GM12878 (cell line): ENCODE measurements at regions of chr7 and their contacts with region 1.

Region 1: DNA sequence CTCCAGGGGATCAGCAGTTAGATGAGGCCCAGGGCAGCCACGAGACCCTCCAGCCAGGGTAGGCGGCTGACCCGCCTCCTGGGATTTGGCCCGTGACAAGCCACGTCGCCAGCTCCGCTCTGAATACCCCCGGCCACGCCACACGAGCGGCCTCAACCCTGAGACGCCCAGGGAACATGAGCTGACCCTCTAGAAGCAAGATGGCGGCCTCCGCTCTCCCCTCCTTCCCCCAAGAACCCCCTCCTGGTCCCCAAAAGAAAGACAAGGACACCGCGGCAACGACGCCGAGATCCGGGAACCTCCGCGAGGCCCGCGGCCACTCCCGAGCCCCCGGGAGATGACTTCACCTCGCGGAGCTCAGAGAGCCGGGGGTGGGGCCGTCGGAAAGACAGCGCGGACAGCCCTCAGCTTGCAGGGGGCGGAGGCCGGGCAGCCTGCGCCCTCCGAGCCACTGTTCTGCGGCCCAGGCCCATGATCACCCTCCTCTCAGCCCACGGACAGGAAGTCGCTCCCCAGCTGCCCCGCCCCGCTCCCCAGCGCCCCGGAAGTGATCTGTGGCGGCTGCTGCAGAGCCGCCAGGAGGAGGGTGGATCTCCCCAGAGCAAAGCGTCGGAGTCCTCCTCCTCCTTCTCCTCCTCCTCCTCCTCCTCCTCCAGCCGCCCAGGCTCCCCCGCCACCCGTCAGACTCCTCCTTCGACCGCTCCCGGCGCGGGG is at the start of gene RALA:
- DNase-seq: peak; percentile 48
- ATAC-seq: peak; percentile 89
- H3K4me3 ChIP-seq: peak within 1 kb of the TSS; percentile 88
- H3K27ac ChIP-seq: peak within 1 kb of the TSS; percentile 89
- H3K4me1 ChIP-seq: peaks cover 11% of the 10 kb centered on the region
- H3K27me3 ChIP-seq: no peaks in the 10 kb centered on the region
- CTCF ChIP-seq: no peak
- EP300 ChIP-seq: no peak
- POLR2A ChIP-seq: peak; percentile 96
- RAD21 ChIP-seq: no peak
- polyA plus RNA-seq, gene RALA: 8.1 to 13.3 TPM

Region 2: DNA sequence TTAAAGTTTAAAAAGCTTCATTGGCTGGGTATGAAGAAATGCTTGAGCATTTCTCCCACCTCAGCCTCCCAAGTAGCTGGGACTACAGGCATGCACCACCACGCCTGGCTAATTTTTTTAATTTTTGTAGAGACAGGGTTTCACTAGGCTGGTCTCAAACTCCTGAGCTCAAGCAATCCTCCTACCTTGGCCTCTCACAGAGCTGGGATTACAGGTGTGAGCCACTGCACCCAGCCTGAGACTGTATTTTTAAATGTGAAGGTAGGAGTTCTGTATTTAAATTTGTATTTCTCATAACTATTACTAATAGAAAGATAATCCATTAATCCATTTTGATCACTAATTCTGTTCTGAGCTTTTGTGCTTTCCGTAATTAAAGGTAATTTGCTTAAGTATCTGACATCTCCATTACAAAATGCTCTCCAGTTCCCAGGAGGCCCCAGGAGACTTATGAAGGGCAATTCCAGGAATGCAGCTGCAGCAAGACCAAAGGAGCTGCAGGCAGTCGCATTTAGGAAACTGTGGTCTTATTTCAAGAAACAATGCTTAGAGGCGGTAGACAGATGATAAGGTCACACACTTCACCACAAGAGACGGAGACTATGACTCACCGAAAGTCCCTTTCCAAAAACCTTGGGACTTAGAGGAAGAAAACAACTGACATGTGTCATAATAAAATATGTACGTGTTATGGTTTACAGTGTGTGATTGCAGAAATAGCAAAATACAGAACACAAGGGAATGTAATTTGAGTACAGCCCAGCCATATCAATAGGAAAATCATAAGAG is 33.7 kb before region 1 on chr7:
- CTCF ChIA-PET with region 1: interaction called, 8 read pairs
- POLR2A ChIA-PET with region 1: interaction called, 8 read pairs
- RAD21 ChIA-PET with region 1: interaction called, 6 read pairs
- SMC1A ChIA-PET with region 1: interaction called, 13 read pairs
- in situ Hi-C with region 1: no loop called
- intact Hi-C with region 1: no loop called
- DNase-seq: peak; percentile 45
- ATAC-seq: peak; percentile 94
- H3K4me3 ChIP-seq: no peak overlapping the region
- H3K27ac ChIP-seq: no peak overlapping the region
- H3K4me1 ChIP-seq: peaks cover 5% of the 10 kb centered on the region; the same call in 1 of the 2 replicates
- H3K27me3 ChIP-seq: no peaks in the 10 kb centered on the region
- CTCF ChIP-seq: no peak
- EP300 ChIP-seq: peak; percentile 90 to 96
- POLR2A ChIP-seq: no peak
- RAD21 ChIP-seq: no peak

Region 3: GRCh38 chr7:39637400-39637799 is 14.2 kb after region 1 on chr7:
- CTCF ChIA-PET with region 1: interaction called, 7 read pairs
- POLR2A ChIA-PET with region 1: interaction called, 8 read pairs
- RAD21 ChIA-PET with region 1: interaction called, 6 read pairs
- SMC1A ChIA-PET with region 1: interaction called, 17 read pairs
- in situ Hi-C with region 1: no loop called
- intact Hi-C with region 1: no loop called
- DNase-seq: no peak
- ATAC-seq: peak; percentile 56
- H3K4me3 ChIP-seq: no peak overlapping the region
- H3K27ac ChIP-seq: no peak overlapping the region; the same call in 1 of the 2 replicates
- H3K4me1 ChIP-seq: peaks cover 32% of the 10 kb centered on the region
- H3K27me3 ChIP-seq: no peaks in the 10 kb centered on the region
- CTCF ChIP-seq: no peak
- EP300 ChIP-seq: no peak
- POLR2A ChIP-seq: no peak
- RAD21 ChIP-seq: no peak

Region 4: DNA sequence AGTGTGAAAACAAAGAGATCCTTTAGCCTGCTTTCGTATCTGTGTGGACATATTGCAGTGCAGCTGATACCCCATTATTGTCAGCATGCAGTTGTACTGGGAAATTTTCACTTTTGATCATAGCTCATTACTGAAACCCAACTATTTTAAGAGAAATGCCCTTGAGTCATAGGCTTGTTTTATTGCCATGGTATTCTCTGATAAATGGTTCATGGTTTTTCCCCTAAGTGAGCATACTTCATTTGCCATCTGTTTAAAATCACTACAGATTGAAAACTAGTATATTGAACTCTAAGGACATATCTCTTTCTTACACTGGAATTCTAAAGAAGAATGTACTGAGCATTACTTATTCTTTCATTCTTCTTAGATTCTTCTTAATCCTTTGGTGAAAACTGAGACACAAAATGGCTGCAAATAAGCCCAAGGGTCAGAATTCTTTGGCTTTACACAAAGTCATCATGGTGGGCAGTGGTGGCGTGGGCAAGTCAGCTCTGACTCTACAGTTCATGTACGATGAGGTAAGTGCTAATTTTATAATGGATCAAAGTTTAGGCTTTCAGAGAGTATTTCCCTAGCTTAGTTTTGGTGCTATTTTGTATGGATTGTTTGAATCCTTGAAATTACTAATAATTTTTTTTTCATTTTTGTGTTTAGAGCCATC is 63.2 kb after region 1 on chr7:
- CTCF ChIA-PET with region 1: no interaction called
- POLR2A ChIA-PET with region 1: interaction called, 9 read pairs
- RAD21 ChIA-PET with region 1: interaction called, 10 read pairs
- SMC1A ChIA-PET with region 1: interaction called, 6 read pairs
- in situ Hi-C with region 1: no loop called
- intact Hi-C with region 1: no loop called
- DNase-seq: peak; percentile 47
- ATAC-seq: peak; percentile 94
- H3K4me3 ChIP-seq: no peak overlapping the region
- H3K27ac ChIP-seq: 0 out of 2 replicates have a peak overlapping the region, but pooled peaks have one; percentile 22
- H3K4me1 ChIP-seq: peaks cover 9% of the 10 kb centered on the region
- H3K27me3 ChIP-seq: no peaks in the 10 kb centered on the region
- CTCF ChIP-seq: no peak
- EP300 ChIP-seq: 0 out of 4 replicates have a peak, but pooled peaks of 1 of the 2 experiments have one; percentile 25
- POLR2A ChIP-seq: no peak
- RAD21 ChIP-seq: no peak

Region 5: DNA sequence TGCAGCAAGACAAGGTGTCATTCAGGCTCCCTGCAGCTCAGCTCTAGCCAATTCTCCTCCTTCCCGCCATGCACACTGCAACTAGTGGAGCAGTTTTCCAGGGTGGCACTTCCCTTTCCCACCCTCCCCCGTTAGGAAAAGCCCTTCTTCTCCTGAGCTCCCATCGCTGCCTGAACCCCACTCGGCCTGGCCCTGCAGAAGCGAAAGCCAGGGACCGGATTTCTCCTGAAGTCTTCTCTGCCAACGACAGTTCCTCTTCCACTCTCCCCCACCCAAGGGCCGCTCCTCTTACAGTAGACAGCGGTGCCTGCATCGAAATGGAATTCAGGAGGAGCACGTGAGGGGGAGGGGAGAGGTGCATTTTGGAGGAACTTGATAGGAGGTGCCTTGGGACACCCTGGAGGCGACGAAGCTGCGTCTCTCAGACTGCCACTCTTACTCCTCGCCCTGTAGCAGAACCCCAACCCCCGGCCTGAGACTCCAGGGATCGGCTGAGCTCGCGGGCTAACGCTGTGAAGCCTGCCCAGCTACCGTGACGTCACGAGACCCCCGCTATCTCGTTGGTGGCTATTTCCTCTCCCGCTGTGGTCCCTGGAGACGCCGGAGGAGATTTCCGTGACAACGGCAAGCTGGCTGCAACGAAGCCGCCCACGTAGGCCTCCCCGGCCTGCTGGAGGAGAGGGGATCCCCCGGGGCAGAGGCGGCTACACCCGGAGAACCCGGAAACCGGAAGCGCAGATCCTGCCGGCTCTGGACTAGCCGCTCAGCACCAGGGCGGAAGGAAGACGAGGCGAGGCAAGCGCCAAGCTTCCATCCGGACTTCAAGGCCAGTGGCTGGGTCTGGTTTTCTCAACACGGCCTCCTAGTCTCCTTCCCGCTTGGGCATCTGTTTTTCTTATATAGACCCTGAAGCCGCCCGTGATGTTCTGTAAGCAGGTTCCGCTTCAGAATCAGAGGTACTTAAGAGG is 109.9 kb after region 1 on chr7:
- CTCF ChIA-PET with region 1: interaction called, 10 read pairs
- POLR2A ChIA-PET with region 1: interaction called, 64 read pairs
- RAD21 ChIA-PET with region 1: interaction called, 75 read pairs
- SMC1A ChIA-PET with region 1: interaction called, 82 read pairs
- in situ Hi-C with region 1: no loop called
- intact Hi-C with region 1: loop called (anchors 1 kb)
- DNase-seq: peak; percentile 95
- ATAC-seq: peak; percentile 93
- H3K4me3 ChIP-seq: peak overlapping the region; percentile 77
- H3K27ac ChIP-seq: peak overlapping the region; percentile 80
- H3K4me1 ChIP-seq: peaks cover 10% of the 10 kb centered on the region
- H3K27me3 ChIP-seq: no peaks in the 10 kb centered on the region
- CTCF ChIP-seq: no peak
- EP300 ChIP-seq: peak; percentile 56 to 79
- POLR2A ChIP-seq: peak; percentile 91
- RAD21 ChIP-seq: peak; percentile 4; the same call in 1 of the 2 replicates

Region 6: DNA sequence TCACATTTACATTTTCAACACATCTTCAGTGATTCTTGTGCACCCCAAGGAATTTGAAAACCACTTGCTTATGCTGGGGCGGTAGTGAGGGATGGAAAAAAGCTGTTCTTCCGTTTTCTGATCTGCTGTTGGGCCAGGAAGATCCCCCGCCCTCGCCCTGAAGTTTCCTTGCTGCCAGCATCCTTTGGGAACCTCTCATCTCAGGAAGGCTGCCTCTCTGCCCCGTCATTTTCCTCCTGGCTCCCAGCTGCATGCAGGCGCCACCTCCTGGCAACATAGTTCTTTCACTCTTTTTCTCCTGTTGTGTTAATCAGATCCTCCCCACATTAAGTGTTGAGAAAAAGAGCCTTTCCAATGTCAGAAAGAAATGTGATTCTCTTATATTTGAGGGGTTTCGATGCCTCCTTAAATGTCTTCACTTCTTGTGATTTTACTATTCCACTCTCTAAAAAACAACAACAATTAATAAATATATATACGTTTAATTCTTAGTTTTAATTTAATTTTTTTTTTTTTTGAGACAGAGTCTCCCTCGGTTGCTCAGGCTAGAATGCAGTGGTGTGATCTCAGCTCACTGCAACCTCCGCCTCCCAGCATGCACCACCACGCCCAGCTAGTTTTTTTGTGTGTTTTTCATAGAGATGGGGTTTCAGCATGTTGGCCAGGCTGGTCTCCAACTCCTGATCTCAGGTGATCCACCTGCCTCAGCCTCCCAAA is 123.1 kb after region 1 on chr7:
- CTCF ChIA-PET with region 1: interaction called, 36 read pairs
- POLR2A ChIA-PET with region 1: interaction called, 5 read pairs
- RAD21 ChIA-PET with region 1: interaction called, 11 read pairs
- SMC1A ChIA-PET with region 1: interaction called, 9 read pairs
- in situ Hi-C with region 1: no loop called
- intact Hi-C with region 1: no loop called
- DNase-seq: no peak
- ATAC-seq: peak; percentile 78
- H3K4me3 ChIP-seq: no peak overlapping the region
- H3K27ac ChIP-seq: no peak overlapping the region
- H3K4me1 ChIP-seq: peaks cover 6% of the 10 kb centered on the region
- H3K27me3 ChIP-seq: no peaks in the 10 kb centered on the region
- CTCF ChIP-seq: peak; percentile 67 to 83 (median 81)
- EP300 ChIP-seq: no peak
- POLR2A ChIP-seq: no peak
- RAD21 ChIP-seq: peak; percentile 91

Region 7: DNA sequence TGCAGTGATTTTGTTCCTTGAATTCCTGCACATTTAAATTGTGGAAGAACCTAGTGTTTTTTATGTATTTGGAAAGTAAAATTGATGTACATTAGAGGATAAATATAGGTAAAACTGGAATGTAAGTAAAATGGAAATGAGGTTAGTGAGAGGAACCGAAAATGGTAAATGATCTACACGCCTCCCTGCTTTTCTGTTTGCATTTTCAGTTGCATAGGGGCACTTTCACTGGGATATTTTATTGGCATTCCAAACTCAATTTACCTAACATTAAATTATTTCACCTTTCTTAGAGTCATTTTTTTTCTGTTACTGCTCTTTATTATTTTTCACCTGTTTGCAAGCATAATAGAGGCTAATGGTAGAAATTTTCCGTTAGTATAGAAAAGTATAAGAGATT is 334.9 kb after region 1 on chr7:
- CTCF ChIA-PET with region 1: no interaction called
- POLR2A ChIA-PET with region 1: no interaction called
- RAD21 ChIA-PET with region 1: no interaction called
- SMC1A ChIA-PET with region 1: no interaction called
- in situ Hi-C with region 1: no loop called
- intact Hi-C with region 1: no loop called
- DNase-seq: no peak
- ATAC-seq: peak; percentile 53
- H3K4me3 ChIP-seq: peak overlapping the region; percentile 49
- H3K27ac ChIP-seq: no peak overlapping the region
- H3K4me1 ChIP-seq: peaks cover 5% of the 10 kb centered on the region; the same call in 1 of the 2 replicates
- H3K27me3 ChIP-seq: no peaks in the 10 kb centered on the region
- CTCF ChIP-seq: no peak
- EP300 ChIP-seq: 0 out of 4 replicates have a peak, but pooled peaks of 1 of the 2 experiments have one; percentile 28
- POLR2A ChIP-seq: no peak
- RAD21 ChIP-seq: no peak